ENCODE measurements at regions of chr11 and their contacts with region 1.

Region 1: GRCh38 chr11:43944761-43945311 is 2.4 kb downstream of the C11orf96 start:
- DNase-seq: peak; percentile 82
- H3K4me3 Mint-ChIP-seq: peak overlapping the region; percentile 41
- H3K27ac Mint-ChIP-seq: no peak overlapping the region
- H3K4me1 Mint-ChIP-seq: peaks cover 17% of the 10 kb centered on the region
- H3K27me3 Mint-ChIP-seq: peaks cover 60% of the 10 kb centered on the region

Region 2: GRCh38 chr11:43962383-43963278 is 17.8 kb after region 1 on chr11:
- CTCF ChIA-PET with region 1: no interaction called
- POLR2A ChIA-PET with region 1: no interaction called
- intact Hi-C with region 1: no loop called
- DNase-seq: no peak
- H3K4me3 Mint-ChIP-seq: no peak overlapping the region
- H3K27ac Mint-ChIP-seq: no peak overlapping the region
- H3K4me1 Mint-ChIP-seq: no peaks in the 10 kb centered on the region
- H3K27me3 Mint-ChIP-seq: peaks cover 25% of the 10 kb centered on the region

Region 3: DNA sequence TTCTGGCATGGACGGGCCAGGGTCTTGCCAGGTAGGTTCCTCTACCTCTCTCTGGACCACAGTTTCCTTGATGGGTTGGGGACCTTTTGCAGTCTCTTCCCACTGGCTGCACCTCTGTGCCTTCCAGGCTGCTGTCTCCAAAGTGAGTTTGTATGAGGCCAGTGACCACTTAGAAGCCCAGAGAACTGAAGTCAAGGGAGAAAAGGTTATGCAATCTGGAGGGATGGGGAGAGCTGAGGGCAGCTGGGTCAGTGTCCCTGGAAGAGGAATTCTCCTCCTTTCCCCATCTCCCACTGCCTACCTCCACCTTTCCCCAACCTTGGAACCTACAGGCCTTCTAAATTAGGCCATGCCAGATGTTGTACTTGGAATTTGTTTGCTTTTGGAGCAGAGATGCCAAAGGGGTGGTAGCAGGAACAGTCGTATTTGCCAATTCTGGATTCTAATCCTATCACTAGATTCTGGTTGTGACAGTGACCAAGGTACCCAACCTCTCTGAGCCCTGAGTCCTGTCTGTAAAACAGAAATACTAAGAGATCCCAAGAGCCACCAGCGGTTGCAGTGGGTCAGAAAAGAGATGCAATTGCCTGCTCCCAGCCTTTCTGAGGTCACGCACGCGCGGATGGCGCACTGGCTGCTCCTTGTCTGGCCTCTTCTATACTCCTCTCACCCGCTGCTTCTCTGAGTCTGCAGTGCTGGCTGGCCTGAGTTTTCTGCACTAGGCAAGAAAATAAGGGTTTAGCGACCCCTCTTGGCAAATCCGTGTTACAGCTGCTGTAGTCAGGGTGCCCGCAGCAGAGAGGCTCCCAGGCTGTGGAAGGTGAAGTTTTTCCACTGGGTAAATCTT is 92.2 kb after region 1 on chr11:
- CTCF ChIA-PET with region 1: no interaction called
- POLR2A ChIA-PET with region 1: no interaction called
- intact Hi-C with region 1: loop called (anchors 1 kb)
- DNase-seq: peak; percentile 54
- H3K4me3 Mint-ChIP-seq: no peak overlapping the region
- H3K27ac Mint-ChIP-seq: no peak overlapping the region
- H3K4me1 Mint-ChIP-seq: no peaks in the 10 kb centered on the region
- H3K27me3 Mint-ChIP-seq: peaks cover 4% of the 10 kb centered on the region

Region 4: DNA sequence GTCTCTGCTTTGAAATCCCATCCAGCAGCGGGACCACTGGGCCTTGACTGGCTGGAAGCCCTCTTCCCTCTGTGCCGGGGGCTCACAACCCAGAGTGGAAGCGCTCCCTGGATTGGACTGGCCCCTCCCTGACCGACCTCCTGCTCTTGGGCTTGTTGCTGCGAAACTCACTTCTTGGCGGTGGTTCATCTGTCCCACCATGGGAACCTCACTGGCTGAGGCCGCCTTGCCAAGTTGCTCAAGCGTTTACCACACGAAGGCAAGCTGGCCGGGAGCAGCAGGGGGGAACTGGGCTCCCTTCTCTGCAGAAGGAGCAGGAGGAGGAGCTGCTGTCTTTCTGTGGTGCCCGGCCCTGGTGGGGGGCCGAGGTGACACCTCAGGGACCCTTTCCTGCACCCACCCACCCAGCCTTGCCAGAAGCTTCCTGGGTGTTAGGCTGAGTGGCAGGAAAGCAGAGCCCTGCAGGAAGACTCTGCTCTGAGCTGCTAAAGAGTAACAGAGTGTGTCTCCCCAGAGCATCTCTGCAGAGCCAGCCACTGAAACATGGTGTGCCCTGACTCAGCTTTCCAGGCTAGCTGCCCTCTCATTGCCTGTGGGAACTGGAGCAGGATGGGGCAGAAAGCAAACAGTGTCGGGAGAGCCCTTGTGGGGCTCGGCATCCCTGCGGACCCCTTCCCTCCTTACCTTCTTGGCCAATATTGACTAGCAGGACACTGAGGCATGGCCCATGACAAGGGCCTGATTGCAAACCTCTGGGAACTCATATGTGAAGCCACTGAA is 453.6 kb after region 1 on chr11:
- CTCF ChIA-PET with region 1: no interaction called
- POLR2A ChIA-PET with region 1: no interaction called
- intact Hi-C with region 1: no loop called
- DNase-seq: no peak
- H3K4me3 Mint-ChIP-seq: no peak overlapping the region
- H3K27ac Mint-ChIP-seq: no peak overlapping the region
- H3K4me1 Mint-ChIP-seq: peaks cover 2% of the 10 kb centered on the region
- H3K27me3 Mint-ChIP-seq: peaks cover 21% of the 10 kb centered on the region

Region 5: GRCh38 chr11:44538375-44539054 is 593.7 kb after region 1 on chr11:
- CTCF ChIA-PET with region 1: no interaction called
- POLR2A ChIA-PET with region 1: no interaction called
- intact Hi-C with region 1: no loop called
- DNase-seq: peak; percentile 82
- H3K4me3 Mint-ChIP-seq: no peak overlapping the region
- H3K27ac Mint-ChIP-seq: no peak overlapping the region
- H3K4me1 Mint-ChIP-seq: peaks cover 3% of the 10 kb centered on the region
- H3K27me3 Mint-ChIP-seq: peaks cover 4% of the 10 kb centered on the region

Measured in activated CD4-positive, alpha-beta memory T cell treated with anti-CD3 and anti-CD28 coated beads for 36 hours (primary cell).